ENCODE measurements at regions of chr2 and their contacts with region 1.

Region 1: GRCh38 chr2:134457765-134458472 is 204.0 kb downstream of the MGAT5 start:
- DNase-seq: no peak
- H3K4me3 Mint-ChIP-seq: no peak overlapping the region
- H3K27ac Mint-ChIP-seq: no peak overlapping the region
- H3K4me1 Mint-ChIP-seq: no peaks in the 10 kb centered on the region
- H3K27me3 Mint-ChIP-seq: no peaks in the 10 kb centered on the region

Region 2: DNA sequence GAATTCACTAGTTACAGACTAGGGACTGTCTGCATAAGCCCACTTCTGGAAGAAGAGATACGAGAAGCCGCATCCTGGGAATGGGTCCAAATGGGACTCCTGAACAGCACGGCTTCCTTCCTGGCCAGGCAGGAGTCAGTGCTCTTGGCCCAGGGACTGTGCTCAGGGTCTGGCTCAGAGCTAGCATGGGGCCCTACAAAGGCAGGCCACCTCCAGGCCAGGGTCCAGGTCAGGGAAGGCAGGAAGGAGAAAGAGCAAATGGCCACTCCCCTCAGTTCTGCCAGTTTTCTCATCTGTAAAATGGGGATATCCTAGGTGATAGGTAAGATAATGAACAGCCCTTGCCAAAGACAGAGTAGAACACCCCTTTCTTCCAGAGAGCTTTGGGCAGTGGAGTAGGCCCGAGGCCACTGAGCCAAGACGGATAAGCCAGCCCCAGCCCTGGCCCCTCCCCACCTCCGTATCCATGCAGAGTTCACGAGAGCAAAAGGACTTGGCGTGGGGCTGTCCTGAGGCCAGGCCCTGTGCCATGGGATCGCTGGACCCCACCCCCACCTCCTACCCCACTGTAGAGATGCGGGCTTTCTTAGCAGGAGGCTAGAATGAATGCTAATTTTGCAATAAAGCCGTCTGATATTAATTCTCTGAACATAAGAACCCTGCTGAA is 14.0 kb before region 1 on chr2:
- CTCF ChIA-PET with region 1: interaction called, 19 read pairs
- POLR2A ChIA-PET with region 1: no interaction called
- intact Hi-C with region 1: no loop called
- DNase-seq: no peak
- H3K4me3 Mint-ChIP-seq: no peak overlapping the region
- H3K27ac Mint-ChIP-seq: no peak overlapping the region
- H3K4me1 Mint-ChIP-seq: no peaks in the 10 kb centered on the region
- H3K27me3 Mint-ChIP-seq: no peaks in the 10 kb centered on the region

Region 3: GRCh38 chr2:134706587-134707329 is 248.8 kb after region 1 on chr2:
- CTCF ChIA-PET with region 1: no interaction called
- POLR2A ChIA-PET with region 1: no interaction called
- intact Hi-C with region 1: loop called (anchors 10 kb)
- DNase-seq: no peak
- H3K4me3 Mint-ChIP-seq: no peak overlapping the region
- H3K27ac Mint-ChIP-seq: no peak overlapping the region
- H3K4me1 Mint-ChIP-seq: peaks cover 14% of the 10 kb centered on the region
- H3K27me3 Mint-ChIP-seq: peaks cover 48% of the 10 kb centered on the region

Region 4: DNA sequence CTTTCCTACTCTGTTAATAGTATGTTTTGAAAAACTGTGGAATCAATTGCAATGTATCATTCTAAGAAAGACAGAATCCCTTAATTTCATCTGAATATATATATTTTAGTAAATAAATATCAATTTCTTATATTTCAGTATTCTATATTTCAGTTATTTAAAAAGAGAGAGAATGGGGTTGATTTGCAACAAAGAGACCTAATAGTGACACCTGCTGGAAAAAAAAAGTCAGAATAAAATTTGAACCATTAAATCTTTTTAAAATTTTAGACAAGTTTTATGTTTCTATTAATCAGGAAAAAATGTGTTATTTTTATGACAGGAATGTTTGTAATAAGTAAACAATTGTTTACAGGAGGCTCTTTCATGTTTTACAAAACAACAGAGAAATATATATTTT is 440.0 kb after region 1 on chr2:
- CTCF ChIA-PET with region 1: interaction called, 17 read pairs
- POLR2A ChIA-PET with region 1: no interaction called
- intact Hi-C with region 1: loop called (anchors 5 kb)
- DNase-seq: no peak
- H3K4me3 Mint-ChIP-seq: no peak overlapping the region
- H3K27ac Mint-ChIP-seq: no peak overlapping the region
- H3K4me1 Mint-ChIP-seq: no peaks in the 10 kb centered on the region
- H3K27me3 Mint-ChIP-seq: no peaks in the 10 kb centered on the region